ENCODE measurements at regions of chr7 and their contacts with region 1.

Region 1: DNA sequence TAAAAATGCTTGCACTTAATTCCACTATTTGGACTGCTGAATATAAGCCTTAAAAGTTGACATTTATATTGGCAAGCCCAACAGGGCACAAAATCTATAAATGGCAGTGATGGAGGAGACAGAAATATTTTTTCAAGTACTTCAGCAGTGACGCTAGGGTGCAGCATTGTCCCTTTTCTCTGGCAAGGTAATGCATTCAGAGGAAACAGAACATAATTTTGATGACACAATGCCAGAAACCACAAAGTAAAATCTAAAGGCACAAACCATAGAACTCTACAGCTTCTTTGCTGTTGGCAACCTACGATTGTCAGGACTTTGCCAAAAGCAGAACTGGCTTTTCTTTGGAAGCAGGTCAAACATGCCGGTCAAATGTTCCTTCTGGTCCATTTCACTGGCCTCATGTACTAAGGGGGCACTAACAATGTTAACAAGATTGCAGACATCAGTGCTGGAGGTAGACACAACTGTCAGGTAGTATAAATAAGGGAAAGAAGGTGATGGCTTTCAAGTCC is 30.9 kb upstream of the FAM133B start:
- DNase-seq: peak; percentile 74
- H3K4me3 Mint-ChIP-seq: peak overlapping the region; percentile 75
- H3K27ac Mint-ChIP-seq: peak overlapping the region; percentile 89
- H3K4me1 Mint-ChIP-seq: peaks cover 58% of the 10 kb centered on the region
- H3K27me3 Mint-ChIP-seq: no peaks in the 10 kb centered on the region

Region 2: DNA sequence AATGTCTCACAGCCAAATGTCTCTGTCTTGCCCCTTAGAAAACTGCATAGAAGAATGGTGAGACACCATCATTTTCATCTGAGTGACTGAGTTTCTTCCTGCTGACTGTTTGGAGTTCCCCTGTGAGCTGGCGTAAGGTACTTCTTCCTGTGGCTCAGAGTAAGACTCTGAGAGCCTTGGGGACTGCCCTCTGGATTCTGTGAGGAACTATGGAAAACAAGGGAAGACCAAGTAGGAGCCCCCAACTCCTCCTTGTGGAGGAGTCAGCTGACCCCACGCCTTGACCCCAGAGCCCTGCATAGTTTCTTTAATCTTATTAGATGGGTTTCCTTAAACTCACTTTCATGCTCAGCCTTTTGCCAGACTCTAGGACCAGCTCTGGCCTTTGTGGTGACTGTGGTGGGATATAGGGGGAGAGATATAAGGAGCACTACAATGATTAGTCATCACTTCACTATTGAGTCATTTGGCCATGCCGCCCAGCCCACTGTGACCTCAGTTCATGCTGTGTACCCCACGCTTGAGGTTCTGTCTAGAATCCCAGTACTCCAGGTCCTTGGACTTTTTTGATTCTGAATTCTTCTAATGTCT is 20.9 kb after region 1 on chr7:
- intact Hi-C with region 1: loop called (anchors 1 kb)
- DNase-seq: peak; percentile 64
- H3K4me3 Mint-ChIP-seq: peak overlapping the region; percentile 58
- H3K27ac Mint-ChIP-seq: peak overlapping the region; percentile 97
- H3K4me1 Mint-ChIP-seq: peaks cover 87% of the 10 kb centered on the region
- H3K27me3 Mint-ChIP-seq: no peaks in the 10 kb centered on the region

Region 3: DNA sequence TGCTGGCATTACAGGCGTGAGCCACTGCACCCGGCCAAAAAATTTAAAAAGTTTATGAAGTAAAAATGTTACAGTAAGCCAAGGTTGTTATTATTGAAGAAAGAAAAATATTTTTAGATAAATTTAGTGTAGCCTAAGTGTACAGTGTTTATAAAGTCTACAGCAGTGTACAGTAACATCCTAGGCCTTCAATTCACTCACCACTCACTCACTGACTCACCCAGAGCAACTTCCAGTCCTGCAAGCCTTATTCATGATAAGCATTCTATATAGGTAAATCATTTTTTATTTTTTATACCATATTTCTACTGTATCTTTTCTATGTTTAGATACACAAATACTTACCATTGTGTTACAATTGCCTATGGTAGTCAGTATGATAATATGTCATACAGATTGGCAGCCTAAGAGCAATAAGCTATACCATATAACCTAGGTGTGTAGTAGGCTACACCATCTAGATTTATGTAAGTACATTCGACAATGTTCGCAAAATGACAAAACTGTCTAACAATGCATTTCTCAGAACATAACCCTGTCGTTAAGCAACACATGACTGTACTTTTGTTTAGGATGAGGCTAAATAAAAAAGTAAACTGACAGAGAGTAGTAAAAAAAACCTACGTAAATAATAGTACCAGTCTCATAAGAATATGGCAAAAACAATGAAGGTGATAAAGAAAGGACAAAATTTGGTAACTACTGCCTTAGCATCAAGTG is 46.9 kb after region 1 on chr7:
- intact Hi-C with region 1: no loop called
- DNase-seq: no peak
- H3K4me3 Mint-ChIP-seq: peak overlapping the region; percentile 15
- H3K27ac Mint-ChIP-seq: peak overlapping the region; percentile 76
- H3K4me1 Mint-ChIP-seq: peaks cover 76% of the 10 kb centered on the region
- H3K27me3 Mint-ChIP-seq: no peaks in the 10 kb centered on the region

Region 4: DNA sequence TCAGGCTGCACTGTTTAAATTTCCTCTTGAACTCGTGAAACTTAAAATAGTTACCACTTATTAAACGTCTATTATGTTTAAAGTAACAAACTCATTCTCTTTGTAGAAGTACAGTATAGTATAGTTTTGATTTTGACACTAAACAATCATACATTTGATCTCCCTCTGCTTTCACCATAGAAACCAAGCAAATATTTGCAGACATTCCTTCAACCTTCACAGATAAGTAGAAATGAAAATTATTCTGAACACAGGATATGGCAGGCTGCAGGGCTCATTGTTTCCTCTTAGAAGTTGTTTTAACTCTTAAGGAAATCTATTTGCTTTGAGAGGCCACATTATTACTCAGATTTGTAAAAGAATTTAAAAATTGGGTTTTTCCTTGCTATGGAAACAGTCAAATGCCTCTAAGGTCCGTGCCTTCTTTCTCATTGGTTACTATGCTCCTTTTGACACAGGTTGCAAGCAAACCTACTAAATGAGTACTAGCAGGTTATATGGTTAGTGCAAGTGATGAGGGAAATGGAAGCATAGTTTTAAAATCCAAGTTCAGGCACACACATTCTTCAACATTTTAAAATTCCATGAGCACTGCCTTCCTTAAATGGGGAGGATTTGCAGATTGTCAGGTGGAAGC is 61.9 kb after region 1 on chr7:
- intact Hi-C with region 1: loop called (anchors 1 kb)
- DNase-seq: no peak
- H3K4me3 Mint-ChIP-seq: peak overlapping the region; percentile 57
- H3K27ac Mint-ChIP-seq: peak overlapping the region; percentile 95
- H3K4me1 Mint-ChIP-seq: peaks cover 90% of the 10 kb centered on the region
- H3K27me3 Mint-ChIP-seq: no peaks in the 10 kb centered on the region

Region 5: GRCh38 chr7:92731335-92732063 is 110.4 kb after region 1 on chr7:
- intact Hi-C with region 1: loop called (anchors 1 kb)
- DNase-seq: no peak
- H3K4me3 Mint-ChIP-seq: peak overlapping the region; percentile 23
- H3K27ac Mint-ChIP-seq: peak overlapping the region; percentile 92
- H3K4me1 Mint-ChIP-seq: peaks cover 80% of the 10 kb centered on the region
- H3K27me3 Mint-ChIP-seq: no peaks in the 10 kb centered on the region

Region 6: DNA sequence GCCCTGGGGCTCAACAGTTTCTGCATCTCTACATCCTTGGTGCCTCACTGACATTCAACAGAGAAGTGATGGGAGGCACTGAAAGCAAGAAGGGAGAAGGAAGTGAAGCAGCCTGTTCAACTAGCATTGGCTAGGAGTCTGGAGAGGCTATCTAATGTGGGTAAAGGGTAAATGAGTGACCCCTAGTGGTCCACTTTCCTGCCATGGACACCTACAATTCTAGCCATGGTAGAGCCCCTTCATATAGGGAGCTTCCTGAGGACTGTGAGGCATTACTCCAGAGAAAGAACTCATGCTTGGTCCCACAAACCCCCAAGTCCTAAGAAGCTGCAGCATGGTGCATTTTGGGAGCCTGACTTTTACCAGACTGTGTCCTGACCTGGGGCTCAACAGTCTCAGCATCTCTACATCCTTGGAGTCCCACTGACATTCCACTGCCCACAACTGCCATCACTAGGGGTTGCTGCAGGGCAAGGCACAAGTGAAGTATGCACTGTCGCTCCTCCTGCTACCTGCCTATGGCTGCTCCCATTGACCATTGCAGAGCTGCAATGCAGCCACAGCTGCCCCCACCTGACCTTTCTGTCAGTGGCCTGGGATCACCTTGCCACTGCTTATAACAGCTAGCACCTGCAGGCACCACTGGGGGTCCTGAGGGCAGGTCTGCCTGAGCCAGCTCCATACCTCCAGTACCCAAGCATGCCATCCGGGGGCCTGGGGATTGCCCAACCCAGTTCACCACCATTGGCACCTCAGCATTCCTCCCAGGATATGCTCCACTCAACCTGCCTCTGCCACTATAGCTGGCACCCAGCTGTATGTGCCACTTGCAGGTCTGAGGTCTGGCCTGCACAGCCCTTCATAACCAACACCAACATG is 259.4 kb after region 1 on chr7:
- intact Hi-C with region 1: loop called (anchors 1 kb)
- DNase-seq: no peak
- H3K4me3 Mint-ChIP-seq: no peak overlapping the region
- H3K27ac Mint-ChIP-seq: no peak overlapping the region
- H3K4me1 Mint-ChIP-seq: peaks cover 67% of the 10 kb centered on the region
- H3K27me3 Mint-ChIP-seq: no peaks in the 10 kb centered on the region

Region 7: DNA sequence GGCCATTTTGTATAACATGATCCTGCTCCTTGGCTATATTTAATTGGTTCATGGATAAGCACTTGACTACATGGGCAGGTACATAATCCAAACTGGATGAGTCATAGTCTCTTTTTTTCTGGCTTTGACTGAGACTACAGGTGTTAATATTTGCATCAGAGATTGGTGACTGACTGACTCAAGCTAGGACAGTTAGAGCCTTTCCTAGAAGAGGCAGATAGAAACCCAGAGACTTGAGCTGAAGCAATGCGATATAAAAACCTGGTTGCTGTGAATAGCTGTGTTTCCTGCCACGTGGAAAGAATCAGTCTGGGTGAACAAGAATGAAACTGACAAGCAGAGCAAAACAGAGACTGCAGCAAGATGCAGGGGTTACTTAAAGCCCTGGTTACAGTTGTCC is 415.7 kb after region 1 on chr7:
- intact Hi-C with region 1: loop called (anchors 1 kb)
- DNase-seq: peak; percentile 53
- H3K4me3 Mint-ChIP-seq: no peak overlapping the region
- H3K27ac Mint-ChIP-seq: peak overlapping the region; percentile 85
- H3K4me1 Mint-ChIP-seq: peaks cover 50% of the 10 kb centered on the region
- H3K27me3 Mint-ChIP-seq: no peaks in the 10 kb centered on the region